Ovary (tissue), 10 donors: ENCODE measurements at regions of chr19 and their contacts with region 1.

Region 1: GRCh38 chr19:18328340-18329034 is 5.6 kb upstream of the LSM4 start:
- DNase-seq: peak; percentile 86 to 95 (median 89)
- H3K4me3 ChIP-seq: no peak overlapping the region
- H3K27ac ChIP-seq: peak overlapping the region in 1 of 2 donors; percentile 13
- H3K4me1 ChIP-seq: peaks cover 4% of the 10 kb centered on the region
- H3K27me3 ChIP-seq: no peaks in the 10 kb centered on the region
- CTCF ChIP-seq: peak; percentile 55 to 99 (median 97)
- EP300 ChIP-seq: no peak
- POLR2A ChIP-seq: no peak

Region 2: DNA sequence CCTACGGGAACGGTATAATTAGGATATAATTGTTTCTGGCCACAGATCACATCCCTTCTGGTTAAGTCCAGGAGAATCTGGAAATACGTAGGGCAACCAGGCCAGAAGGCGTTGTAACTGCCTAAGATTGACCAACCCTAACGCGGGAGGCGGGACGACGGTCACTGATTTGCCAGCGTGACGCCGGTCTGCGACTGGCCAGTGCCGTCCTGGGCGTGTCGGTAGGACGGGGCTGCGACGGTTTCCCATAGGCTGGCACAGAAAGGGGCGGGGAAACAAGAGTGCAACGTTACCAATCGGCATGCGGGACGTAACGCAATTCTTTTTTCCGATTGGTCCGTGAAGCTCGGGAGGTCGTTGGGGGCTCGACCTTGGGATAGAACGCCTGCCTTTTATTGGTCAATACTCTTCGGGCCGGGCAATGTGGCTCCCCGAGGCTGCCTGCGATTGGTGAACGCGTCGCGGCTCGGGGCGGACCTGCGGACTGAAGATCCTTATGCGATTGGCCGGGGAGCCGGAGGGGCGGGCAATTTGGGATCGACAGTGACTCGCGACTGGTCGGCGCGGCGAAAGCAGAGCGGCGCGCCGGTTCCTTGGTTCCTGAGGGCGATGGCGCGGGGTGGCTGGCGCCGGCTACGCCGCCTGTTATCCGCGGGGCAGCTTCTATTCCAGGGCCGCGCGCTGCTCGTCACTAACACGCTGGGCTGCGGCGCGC is 135.7 kb before region 1 on chr19 and contains the start of gene MPV17L2:
- intact Hi-C with region 1: loop called in 2 of 4 experiments (anchors 5 kb)
- DNase-seq: peak; percentile 98 to 100 (median 99)
- H3K4me3 ChIP-seq: peak within 1 kb of the TSS; percentile 62
- H3K27ac ChIP-seq: peak within 1 kb of the TSS; percentile 81 to 95
- H3K4me1 ChIP-seq: peaks cover 6% of the 10 kb centered on the region
- H3K27me3 ChIP-seq: no peaks in the 10 kb centered on the region
- CTCF ChIP-seq: peak in 2 of 3 donors; percentile 2 to 23
- EP300 ChIP-seq: peak; percentile 37
- POLR2A ChIP-seq: peak; percentile 93
- total RNA-seq, gene MPV17L2: 6.9 to 15.2 (median 8.6) TPM

Region 3: DNA sequence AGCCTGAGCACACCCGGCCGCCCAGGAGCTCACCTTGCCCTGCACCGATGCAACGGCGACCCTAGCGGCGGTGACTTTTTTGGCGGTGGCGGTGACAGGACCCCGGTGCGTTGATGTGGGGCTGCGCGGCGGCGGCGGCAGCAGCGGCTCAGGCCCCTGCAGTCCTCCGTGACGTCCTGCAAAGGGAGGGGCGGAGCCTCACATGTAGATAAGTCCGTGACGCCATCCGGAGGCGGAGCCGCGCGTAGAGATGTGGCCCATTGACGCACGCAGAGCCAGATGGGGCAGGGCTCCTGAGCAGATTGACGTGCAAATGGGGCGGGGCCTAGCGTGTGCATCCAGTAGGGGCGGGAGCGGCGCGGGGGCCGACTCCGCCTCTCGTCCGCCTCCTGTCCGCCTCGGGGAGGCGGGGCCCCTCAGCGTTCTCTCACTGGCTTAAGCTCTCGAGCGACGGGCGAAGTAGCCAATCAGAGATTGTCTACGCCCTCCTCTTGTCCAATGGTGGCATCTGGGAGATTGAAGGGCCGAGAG is 124.6 kb before region 1 on chr19 and contains the start of gene RAB3A:
- intact Hi-C with region 1: loop called in 2 of 4 experiments (anchors 5 kb)
- DNase-seq: peak; percentile 100
- H3K4me3 ChIP-seq: peak within 1 kb of the TSS; percentile 68
- H3K27ac ChIP-seq: peak within 1 kb of the TSS; percentile 93 to 97
- H3K4me1 ChIP-seq: peaks cover 12% of the 10 kb centered on the region
- H3K27me3 ChIP-seq: no peaks in the 10 kb centered on the region
- CTCF ChIP-seq: peak in 1 of 3 donors; percentile 27
- EP300 ChIP-seq: peak; percentile 85
- POLR2A ChIP-seq: peak; percentile 56
- total RNA-seq, gene RAB3A: 1.9 to 32.9 (median 9.0) TPM

Region 4: GRCh38 chr19:18281082-18282020 is 47.1 kb before region 1 on chr19 and contains the start of gene JUND:
- intact Hi-C with region 1: loop called (anchors 2 to 5 kb)
- DNase-seq: peak; percentile 98 to 99 (median 99)
- H3K4me3 ChIP-seq: peak within 1 kb of the TSS; percentile 93
- H3K27ac ChIP-seq: peak within 1 kb of the TSS; percentile 99 to 100
- H3K4me1 ChIP-seq: peaks cover 16% of the 10 kb centered on the region
- H3K27me3 ChIP-seq: no peaks in the 10 kb centered on the region
- CTCF ChIP-seq: peak in 1 of 3 donors; percentile 32
- EP300 ChIP-seq: peak; percentile 95
- POLR2A ChIP-seq: peak; percentile 97
- total RNA-seq, gene JUND: 163 to 1,260 (median 581) TPM

Region 5: DNA sequence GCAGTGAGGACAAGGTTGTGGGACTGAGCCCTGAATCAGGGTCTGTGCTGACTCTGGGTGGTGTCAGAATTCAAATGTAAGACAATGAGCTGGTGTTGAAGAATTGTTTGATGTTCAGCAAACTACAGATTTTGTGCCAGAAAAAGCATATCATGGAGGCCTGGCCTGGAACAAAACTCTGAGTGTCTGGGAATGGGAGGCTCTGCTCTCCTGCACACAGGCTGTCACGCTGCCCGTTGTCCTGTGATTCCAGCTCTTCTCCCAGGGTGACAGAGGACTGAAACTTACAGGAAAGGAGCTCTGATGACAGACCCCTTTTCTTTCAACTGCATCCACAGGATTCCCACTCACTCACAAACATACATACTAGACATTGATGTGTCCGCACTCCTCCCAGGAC is 1958.6 kb after region 1 on chr19:
- intact Hi-C with region 1: no loop called
- DNase-seq: no peak
- H3K4me3 ChIP-seq: no peak overlapping the region
- H3K27ac ChIP-seq: no peak overlapping the region
- H3K4me1 ChIP-seq: no peaks in the 10 kb centered on the region
- H3K27me3 ChIP-seq: no peaks in the 10 kb centered on the region
- CTCF ChIP-seq: no peak
- EP300 ChIP-seq: no peak
- POLR2A ChIP-seq: no peak